Mammary epithelial cell (primary cell): ENCODE measurements at regions of chr17 and their contacts with region 1.

Region 1: GRCh38 chr17:80035943-80036714 is at the start of gene CCDC40:
- DNase-seq: peak; percentile 68
- H3K4me3 ChIP-seq: peak within 1 kb of the TSS; percentile 70 to 83 (median 77)
- H3K27ac ChIP-seq: peak within 1 kb of the TSS; percentile 58
- H3K4me1 ChIP-seq: peaks cover 10% of the 10 kb centered on the region
- H3K27me3 ChIP-seq: no peaks in the 10 kb centered on the region
- CTCF ChIP-seq: peak in 1 of 2 donors; percentile 33
- total RNA-seq, gene CCDC40: 2.7 to 3.0 TPM

Region 2: DNA sequence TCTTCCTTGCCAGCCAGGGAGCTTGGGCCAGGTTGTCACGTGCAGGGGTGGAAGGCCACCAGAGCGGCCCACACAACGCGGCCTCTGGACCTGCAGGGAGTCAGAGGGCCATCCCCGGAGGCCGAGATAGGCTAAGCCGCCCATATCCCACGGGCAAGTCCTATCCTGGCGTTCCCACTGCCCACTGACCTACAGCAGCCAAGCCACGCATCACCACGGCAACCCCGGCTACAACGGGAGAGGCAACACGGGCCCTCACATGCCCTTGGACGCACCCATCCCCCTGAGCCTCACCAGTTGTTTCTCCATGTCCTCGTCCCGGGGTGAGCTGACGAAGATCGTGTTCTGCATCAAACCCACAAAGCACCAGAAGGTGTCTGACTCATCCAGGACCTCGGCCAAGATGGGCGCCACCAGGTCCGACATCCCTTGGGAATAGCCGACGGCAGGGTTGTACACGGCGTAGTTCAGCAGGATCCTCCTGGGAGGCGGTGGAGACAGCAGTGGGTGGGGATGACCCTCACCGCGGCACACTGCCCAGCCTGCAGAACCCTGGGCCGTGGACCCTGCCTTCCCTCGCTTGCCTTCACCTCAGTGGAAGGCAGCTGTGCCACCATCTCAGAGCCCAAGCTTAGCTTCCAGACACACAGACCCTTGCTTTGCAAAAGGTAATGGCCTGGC is 88.6 kb before region 1 on chr17:
- CTCF ChIA-PET with region 1: no interaction called
- dilution Hi-C with region 1: loop called (anchors 5 kb)
- in situ Hi-C with region 1: no loop called
- intact Hi-C with region 1: no loop called
- DNase-seq: peak; percentile 97
- H3K4me3 ChIP-seq: peak overlapping the region in 1 of 3 experiments; percentile 14
- H3K27ac ChIP-seq: peak overlapping the region; percentile 48
- H3K4me1 ChIP-seq: peaks cover 14% of the 10 kb centered on the region
- H3K27me3 ChIP-seq: no peaks in the 10 kb centered on the region
- CTCF ChIP-seq: no peak

Region 3: DNA sequence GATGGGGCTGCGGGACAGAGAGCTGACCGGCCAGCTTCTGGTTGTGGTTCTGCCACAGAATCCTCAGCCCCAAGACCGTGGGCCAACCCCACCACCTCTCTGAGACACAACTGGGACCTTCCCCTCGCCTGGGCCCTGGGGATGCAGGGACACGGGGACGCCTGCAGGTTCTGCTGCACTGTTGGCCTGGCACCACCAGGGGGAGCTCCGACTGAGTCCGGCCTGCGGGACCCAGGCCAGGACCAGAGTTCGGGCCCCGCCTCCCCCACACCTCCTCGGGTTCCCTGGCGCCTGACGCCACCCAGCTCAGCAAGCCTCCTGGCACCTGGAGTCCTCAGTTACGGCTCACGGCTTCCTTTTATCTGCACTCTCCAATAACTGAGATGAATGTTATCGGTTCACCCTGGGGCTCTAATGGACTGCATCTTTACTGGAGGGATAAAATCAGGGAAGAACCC is 27.7 kb before region 1 on chr17:
- CTCF ChIA-PET with region 1: interaction called, 3 read pairs
- dilution Hi-C with region 1: no loop called
- in situ Hi-C with region 1: no loop called
- intact Hi-C with region 1: loop called (anchors 1 kb)
- DNase-seq: peak; percentile 48
- H3K4me3 ChIP-seq: no peak overlapping the region
- H3K27ac ChIP-seq: no peak overlapping the region
- H3K4me1 ChIP-seq: no peaks in the 10 kb centered on the region
- H3K27me3 ChIP-seq: no peaks in the 10 kb centered on the region
- CTCF ChIP-seq: peak; percentile 94 to 95

Region 4: DNA sequence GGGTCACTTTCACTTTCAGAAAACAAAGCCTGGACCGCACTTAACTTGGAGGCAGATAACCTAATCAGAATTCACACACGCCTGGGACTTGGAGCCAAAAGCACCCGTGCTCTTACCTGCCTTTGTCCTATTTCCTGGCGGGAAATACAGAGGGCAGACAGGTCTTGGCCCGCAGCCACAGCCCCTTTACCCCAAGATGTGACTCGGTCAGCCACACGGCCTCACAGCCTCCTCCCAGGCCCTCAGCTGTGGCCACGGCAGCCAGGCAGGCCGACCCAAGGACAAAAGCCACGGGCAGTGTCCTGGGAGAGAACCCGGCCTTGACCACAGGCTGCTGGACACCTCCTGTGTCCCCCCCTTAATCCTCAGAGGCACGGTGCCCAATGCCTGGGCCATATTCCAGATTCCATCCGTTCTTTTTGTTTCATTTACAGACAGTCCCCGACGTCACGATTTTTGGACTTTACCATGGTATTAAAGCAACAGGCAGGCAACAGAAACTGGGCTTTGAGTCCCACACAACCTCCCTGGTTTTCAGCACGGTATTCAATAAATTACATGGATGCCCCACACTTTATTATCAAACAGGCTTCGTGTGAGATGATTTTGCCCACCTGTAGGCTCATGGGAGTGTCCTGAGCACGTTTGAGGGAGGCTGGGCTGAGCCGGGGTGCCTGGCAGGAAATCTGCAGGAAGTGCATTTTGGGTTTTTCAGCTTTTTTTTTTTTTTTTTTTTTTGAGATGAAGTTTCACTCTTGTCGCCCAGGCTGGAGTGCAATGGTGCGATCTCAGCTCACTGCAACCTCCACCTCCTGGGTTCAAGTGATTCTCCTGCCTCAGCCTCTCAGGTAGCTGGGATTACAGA is 35.2 kb after region 1 on chr17:
- CTCF ChIA-PET with region 1: no interaction called
- dilution Hi-C with region 1: loop called (anchors 5 kb)
- in situ Hi-C with region 1: no loop called
- intact Hi-C with region 1: no loop called
- DNase-seq: no peak
- H3K4me3 ChIP-seq: peak overlapping the region in 1 of 3 experiments; percentile 10
- H3K27ac ChIP-seq: no peak overlapping the region
- H3K4me1 ChIP-seq: peaks cover 7% of the 10 kb centered on the region
- H3K27me3 ChIP-seq: no peaks in the 10 kb centered on the region
- CTCF ChIP-seq: no peak